Activated CD4-positive, alpha-beta T cell treated with anti-CD3 and anti-CD28 coated beads, Interleukin-2, amount 10 ng/mL, durations not matched to agents 24 days and 14 days (primary cell): ENCODE measurements at regions of chr6 and their contacts with region 1.

Region 1: DNA sequence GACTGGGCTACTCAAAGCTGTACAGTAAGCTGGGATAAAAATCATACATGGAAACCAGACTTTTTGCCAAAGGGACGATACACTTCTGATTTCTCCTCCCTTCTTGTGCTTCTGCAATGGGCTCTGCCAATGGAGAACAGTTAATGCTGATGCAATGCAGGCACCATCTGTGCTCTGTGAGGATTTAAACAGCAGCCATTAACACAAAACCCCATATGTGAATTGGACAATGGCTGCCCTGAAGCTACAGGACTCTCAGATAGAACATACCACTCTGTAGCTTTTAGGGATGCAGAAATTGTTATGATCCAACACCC is 71.9 kb downstream of the GJA10 start:
- DNase-seq: no peak
- H3K4me3 Mint-ChIP-seq: no peak overlapping the region
- H3K27ac Mint-ChIP-seq: peak overlapping the region; percentile 71
- H3K4me1 Mint-ChIP-seq: peaks cover 53% of the 10 kb centered on the region
- H3K27me3 Mint-ChIP-seq: no peaks in the 10 kb centered on the region

Region 2: DNA sequence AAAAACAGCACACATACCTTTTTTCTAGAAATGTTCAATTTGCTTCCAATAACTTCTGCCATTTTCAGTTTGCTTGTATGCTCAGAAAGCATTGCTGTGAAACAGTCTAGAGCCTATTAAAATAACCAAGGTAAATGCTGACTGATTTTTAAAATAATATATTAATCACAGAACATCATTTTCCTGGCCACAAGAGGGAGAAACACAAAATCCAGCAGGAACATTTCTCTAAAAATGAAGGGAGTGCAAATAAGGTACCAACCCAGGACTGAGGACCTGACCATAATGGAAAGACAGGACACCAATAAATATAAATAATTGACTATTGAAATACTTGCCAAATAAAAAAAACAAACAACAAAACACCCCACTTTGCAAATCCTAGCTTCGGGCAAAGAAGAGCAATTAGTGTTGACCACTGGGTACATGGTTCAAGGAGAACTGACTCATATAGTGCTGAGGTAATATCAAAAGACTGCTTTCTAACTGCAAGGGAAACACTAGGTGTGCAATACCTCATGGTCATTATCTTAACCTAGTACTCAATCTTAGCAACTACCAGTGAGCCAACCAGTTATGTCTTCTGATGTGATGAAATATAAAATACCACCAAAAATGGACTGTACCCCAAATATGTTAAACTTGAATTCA is 189.5 kb before region 1 on chr6:
- intact Hi-C with region 1: no loop called
- DNase-seq: no peak
- H3K4me3 Mint-ChIP-seq: no peak overlapping the region
- H3K27ac Mint-ChIP-seq: no peak overlapping the region
- H3K4me1 Mint-ChIP-seq: no peaks in the 10 kb centered on the region
- H3K27me3 Mint-ChIP-seq: no peaks in the 10 kb centered on the region

Region 3: DNA sequence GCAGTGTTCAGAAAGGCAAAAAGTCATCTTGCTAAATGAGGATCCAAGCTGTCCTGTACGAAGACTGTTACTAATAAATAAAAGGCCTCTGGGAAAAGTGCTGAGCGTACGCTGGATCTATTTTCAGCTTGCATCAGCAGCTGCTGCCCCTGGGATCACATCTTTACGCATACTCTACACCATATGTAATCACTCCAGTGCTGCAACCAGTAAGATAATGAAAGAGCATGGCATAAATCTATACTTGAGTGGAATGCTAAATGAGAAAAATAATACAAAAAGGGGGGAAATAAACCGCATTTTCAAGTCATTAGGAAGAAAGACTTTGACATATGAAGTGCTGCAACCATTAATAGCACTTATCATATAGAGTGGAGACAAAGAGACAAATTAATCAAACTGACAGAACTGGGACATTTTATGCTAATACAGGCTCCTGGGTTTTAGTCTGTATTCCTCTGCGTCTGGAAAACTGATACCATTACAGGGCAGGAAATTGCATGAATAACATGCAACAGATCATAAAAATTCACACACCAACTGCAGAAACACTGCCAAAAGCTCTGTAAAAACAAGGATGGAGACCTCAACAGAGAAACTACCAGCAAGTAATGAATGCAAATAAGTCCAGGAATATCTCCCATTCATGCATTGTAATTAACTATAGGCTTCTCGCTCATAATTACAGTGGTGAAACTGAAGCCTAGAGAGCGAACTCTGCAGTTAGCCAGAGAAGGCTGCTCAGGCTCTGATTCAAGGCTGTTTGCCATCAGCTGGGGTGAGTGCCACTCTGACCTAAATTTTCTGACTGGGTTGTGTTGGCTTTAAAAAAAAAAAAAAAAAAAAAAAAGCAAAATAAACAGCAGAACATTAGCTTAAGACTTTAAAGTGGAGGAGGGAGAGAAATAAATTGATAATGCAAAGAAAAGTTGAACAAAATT is 11.9 kb after region 1 on chr6:
- intact Hi-C with region 1: loop called (anchors 2 kb)
- DNase-seq: no peak
- H3K4me3 Mint-ChIP-seq: no peak overlapping the region
- H3K27ac Mint-ChIP-seq: no peak overlapping the region
- H3K4me1 Mint-ChIP-seq: peaks cover 16% of the 10 kb centered on the region
- H3K27me3 Mint-ChIP-seq: no peaks in the 10 kb centered on the region

Region 4: GRCh38 chr6:90008908-90009501 is 42.8 kb after region 1 on chr6:
- intact Hi-C with region 1: loop called (anchors 5 kb)
- DNase-seq: peak; percentile 54
- H3K4me3 Mint-ChIP-seq: peak overlapping the region; percentile 40
- H3K27ac Mint-ChIP-seq: peak overlapping the region; percentile 85
- H3K4me1 Mint-ChIP-seq: peaks cover 33% of the 10 kb centered on the region
- H3K27me3 Mint-ChIP-seq: no peaks in the 10 kb centered on the region